ENCODE measurements at regions of chr3 and their contacts with region 1.

Region 1: GRCh38 chr3:190205739-190206138 is 85.0 kb upstream of the P3H2 start:
- DNase-seq: no peak
- H3K4me3 ChIP-seq: no peak overlapping the region
- H3K4me3 Mint-ChIP-seq: no peak overlapping the region
- H3K27ac Mint-ChIP-seq: no peak overlapping the region
- H3K4me1 ChIP-seq: peaks cover 4% of the 10 kb centered on the region; the same call in 1 of the 2 replicates
- H3K4me1 Mint-ChIP-seq: peaks cover 6% of the 10 kb centered on the region
- H3K27me3 ChIP-seq: no peaks in the 10 kb centered on the region
- H3K27me3 Mint-ChIP-seq: no peaks in the 10 kb centered on the region
- CTCF ChIP-seq: no peak

Region 2: GRCh38 chr3:190017521-190018288 is 188.0 kb before region 1 on chr3:
- CTCF ChIA-PET with region 1: no interaction called
- POLR2A ChIA-PET with region 1: no interaction called
- intact Hi-C with region 1: loop called (anchors 1 kb)
- DNase-seq: peak in 1 of 2 experiments; percentile 26
- H3K4me3 ChIP-seq: no peak overlapping the region
- H3K4me3 Mint-ChIP-seq: no peak overlapping the region
- H3K27ac Mint-ChIP-seq: no peak overlapping the region
- H3K4me1 ChIP-seq: peaks cover 32% of the 10 kb centered on the region
- H3K4me1 Mint-ChIP-seq: peaks cover 30% of the 10 kb centered on the region
- H3K27me3 ChIP-seq: no peaks in the 10 kb centered on the region
- H3K27me3 Mint-ChIP-seq: no peaks in the 10 kb centered on the region
- CTCF ChIP-seq: peak in 1 of 2 experiments; percentile 33

Region 3: GRCh38 chr3:190038050-190038933 is 167.4 kb before region 1 on chr3:
- CTCF ChIA-PET with region 1: no interaction called
- POLR2A ChIA-PET with region 1: no interaction called
- intact Hi-C with region 1: no loop called
- DNase-seq: peak; percentile 76 to 79
- H3K4me3 ChIP-seq: no peak overlapping the region
- H3K4me3 Mint-ChIP-seq: peak overlapping the region; percentile 31
- H3K27ac Mint-ChIP-seq: peak overlapping the region; percentile 46
- H3K4me1 ChIP-seq: peaks cover 9% of the 10 kb centered on the region
- H3K4me1 Mint-ChIP-seq: peaks cover 18% of the 10 kb centered on the region
- H3K27me3 ChIP-seq: no peaks in the 10 kb centered on the region
- H3K27me3 Mint-ChIP-seq: no peaks in the 10 kb centered on the region
- CTCF ChIP-seq: no peak